ENCODE measurements at regions of chr4 and their contacts with region 1.

Region 1: DNA sequence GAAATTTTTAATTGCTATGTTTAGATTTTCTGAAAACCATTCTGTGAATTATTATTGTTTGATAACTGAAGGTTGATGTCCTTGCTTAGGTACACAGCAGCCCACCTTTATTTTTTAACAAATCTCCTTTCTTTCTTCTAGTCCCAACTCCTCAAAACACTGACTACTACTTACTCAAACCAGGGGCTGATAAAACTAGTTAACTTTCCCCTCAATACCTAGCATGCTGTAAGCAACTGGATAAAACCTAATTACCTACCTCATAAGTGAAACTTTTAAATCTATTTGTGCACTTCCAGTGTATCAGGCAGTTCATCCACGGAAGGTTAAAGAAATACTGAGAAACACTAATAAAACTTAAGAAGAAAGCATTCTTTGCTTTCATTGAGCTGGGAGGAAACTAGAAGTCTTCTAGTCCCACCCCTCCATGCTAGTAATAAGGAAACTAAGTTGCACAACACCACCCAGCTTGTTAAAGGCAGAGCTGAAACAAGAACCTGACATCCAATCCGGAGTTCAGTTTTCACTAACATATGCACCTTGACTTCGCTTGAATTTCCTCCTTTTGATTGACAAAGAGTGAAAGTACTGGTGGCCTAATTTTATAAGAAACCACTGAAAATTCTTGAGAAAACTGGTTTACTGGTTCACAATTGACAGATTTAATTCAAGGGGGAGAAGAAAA is 180.2 kb upstream of the TET2 start:
- DNase-seq: peak; percentile 42
- H3K4me3 Mint-ChIP-seq: peak overlapping the region; percentile 63
- H3K27ac Mint-ChIP-seq: peak overlapping the region; percentile 91
- H3K4me1 Mint-ChIP-seq: peaks cover 17% of the 10 kb centered on the region
- H3K27me3 Mint-ChIP-seq: peaks cover 5% of the 10 kb centered on the region

Region 2: DNA sequence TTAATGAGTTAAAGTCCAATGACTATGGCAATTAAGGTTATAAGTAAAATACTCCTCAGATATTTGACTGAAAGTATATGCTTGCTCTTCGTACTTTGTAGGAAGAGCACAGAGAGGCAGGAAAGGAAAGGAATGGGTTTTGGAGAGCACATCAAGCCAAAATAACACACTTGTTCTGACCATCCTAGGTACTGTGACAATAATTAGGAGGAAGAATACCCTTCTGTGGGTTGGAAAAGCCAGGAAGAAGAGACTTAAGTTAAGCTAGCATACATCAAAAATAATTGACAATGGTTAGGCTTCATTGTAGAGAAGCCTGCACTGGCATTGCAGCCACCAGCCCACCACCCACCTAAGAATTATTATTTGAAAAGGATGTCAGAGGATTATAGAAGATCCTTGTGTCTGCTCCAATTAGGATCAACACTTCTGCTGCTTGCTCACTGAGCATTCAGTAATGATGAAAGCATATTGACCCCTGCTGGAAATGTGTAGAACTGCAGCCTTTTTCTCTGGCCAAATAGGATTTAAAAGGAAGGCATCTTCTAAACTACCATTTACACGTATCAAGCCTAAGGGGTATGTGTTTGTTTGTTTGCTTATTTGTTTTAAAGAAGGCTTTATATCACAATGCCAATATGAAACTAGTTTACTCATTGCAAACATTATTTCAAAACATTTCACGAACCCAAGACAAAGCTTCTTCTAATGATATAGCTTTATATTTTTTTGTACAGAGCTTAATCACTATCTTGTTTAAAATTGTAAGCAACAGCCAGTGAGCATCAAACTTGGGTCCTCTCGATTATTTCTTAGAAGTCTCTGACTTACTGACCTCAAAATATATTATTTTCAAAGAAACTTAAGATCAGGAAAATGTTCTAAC is 106.0 kb before region 1 on chr4:
- intact Hi-C with region 1: no loop called
- DNase-seq: peak; percentile 33
- H3K4me3 Mint-ChIP-seq: no peak overlapping the region
- H3K27ac Mint-ChIP-seq: no peak overlapping the region
- H3K4me1 Mint-ChIP-seq: no peaks in the 10 kb centered on the region
- H3K27me3 Mint-ChIP-seq: peaks cover 14% of the 10 kb centered on the region

Region 3: DNA sequence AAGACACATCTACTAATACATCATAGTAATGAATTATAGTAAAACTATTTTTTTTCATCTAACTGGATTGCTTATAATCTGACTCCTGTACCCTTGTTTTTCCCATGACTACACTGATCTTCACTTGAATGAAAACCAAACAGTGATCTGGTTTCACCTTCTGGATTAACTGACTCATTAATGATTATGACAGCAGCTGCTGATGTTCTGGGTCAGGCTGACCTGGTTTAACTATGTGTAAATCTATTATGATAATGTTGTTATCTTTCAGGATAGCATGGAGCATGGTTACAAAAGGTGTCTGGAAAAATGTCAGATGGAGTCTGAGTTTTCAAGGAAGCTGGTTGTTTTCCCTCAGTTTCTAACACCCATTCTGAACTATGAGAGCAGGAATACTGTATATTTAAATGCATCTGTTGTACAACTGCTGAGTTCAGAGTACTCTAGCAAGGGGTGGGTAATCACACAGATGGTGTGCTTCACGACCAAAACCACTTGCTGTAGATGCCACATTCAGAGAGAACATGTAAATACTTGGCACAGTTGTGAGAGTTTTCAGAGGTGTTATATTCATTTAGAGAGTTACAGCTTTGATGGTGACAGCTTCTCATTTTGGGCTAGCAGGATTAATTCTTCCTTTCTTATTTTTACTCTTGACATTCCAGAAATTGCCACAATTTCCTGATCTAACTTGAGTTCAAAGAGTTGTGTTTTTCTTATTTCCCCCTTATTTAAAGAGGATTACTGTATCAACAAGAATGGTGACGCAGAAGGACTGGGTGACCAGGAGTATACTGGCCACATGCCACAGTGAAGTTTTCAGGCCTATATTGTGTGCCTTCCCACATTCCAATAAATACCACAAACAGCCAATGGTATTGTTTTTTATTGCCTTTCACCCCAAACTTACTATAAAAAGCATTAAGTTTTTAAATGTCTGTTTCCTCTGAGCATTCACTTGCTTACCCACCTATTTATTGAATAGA is 69.5 kb before region 1 on chr4:
- intact Hi-C with region 1: loop called (anchors 2 kb)
- DNase-seq: no peak
- H3K4me3 Mint-ChIP-seq: no peak overlapping the region
- H3K27ac Mint-ChIP-seq: no peak overlapping the region
- H3K4me1 Mint-ChIP-seq: peaks cover 11% of the 10 kb centered on the region
- H3K27me3 Mint-ChIP-seq: no peaks in the 10 kb centered on the region

Region 4: GRCh38 chr4:104941661-104942062 is 24.8 kb before region 1 on chr4:
- intact Hi-C with region 1: loop called (anchors 2 kb)
- DNase-seq: no peak
- H3K4me3 Mint-ChIP-seq: no peak overlapping the region
- H3K27ac Mint-ChIP-seq: no peak overlapping the region
- H3K4me1 Mint-ChIP-seq: peaks cover 23% of the 10 kb centered on the region
- H3K27me3 Mint-ChIP-seq: peaks cover 3% of the 10 kb centered on the region

Region 5: DNA sequence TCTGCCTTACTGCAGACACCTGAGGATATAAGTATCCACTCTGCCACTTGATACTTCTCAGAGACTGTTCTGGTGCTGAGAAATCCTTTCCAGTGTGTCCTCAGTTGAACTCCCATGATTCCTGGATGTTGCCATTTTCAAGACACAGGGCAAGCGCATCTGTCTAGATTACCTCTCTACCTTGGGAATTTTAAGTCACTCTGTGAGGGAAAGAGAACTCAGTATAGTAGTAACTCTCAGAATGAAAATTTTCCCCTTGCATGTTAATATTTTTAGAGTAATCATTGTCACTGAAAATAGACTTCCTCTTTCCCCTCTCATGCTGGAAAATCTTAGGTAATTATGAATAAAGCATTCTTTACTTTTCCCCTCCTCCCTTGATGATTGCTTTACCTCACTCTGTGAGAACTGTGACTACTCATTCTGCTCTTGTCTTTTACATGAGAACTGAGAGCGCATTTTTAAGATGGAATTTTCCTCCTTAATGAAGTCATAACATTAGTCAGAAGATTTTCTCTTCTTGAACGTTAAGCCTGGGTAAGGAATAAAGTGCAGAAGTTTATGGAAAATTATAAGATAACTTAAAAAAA is 225.2 kb after region 1 on chr4:
- intact Hi-C with region 1: loop called (anchors 10 kb)
- DNase-seq: no peak
- H3K4me3 Mint-ChIP-seq: peak overlapping the region; percentile 8
- H3K27ac Mint-ChIP-seq: peak overlapping the region; percentile 74
- H3K4me1 Mint-ChIP-seq: peaks cover 53% of the 10 kb centered on the region
- H3K27me3 Mint-ChIP-seq: no peaks in the 10 kb centered on the region

Region 6: GRCh38 chr4:105306158-105306781 is 339.8 kb after region 1 on chr4:
- intact Hi-C with region 1: loop called (anchors 1 kb)
- DNase-seq: peak; percentile 60
- H3K4me3 Mint-ChIP-seq: peak overlapping the region; percentile 41
- H3K27ac Mint-ChIP-seq: peak overlapping the region; percentile 92
- H3K4me1 Mint-ChIP-seq: peaks cover 25% of the 10 kb centered on the region
- H3K27me3 Mint-ChIP-seq: no peaks in the 10 kb centered on the region

Region 7: DNA sequence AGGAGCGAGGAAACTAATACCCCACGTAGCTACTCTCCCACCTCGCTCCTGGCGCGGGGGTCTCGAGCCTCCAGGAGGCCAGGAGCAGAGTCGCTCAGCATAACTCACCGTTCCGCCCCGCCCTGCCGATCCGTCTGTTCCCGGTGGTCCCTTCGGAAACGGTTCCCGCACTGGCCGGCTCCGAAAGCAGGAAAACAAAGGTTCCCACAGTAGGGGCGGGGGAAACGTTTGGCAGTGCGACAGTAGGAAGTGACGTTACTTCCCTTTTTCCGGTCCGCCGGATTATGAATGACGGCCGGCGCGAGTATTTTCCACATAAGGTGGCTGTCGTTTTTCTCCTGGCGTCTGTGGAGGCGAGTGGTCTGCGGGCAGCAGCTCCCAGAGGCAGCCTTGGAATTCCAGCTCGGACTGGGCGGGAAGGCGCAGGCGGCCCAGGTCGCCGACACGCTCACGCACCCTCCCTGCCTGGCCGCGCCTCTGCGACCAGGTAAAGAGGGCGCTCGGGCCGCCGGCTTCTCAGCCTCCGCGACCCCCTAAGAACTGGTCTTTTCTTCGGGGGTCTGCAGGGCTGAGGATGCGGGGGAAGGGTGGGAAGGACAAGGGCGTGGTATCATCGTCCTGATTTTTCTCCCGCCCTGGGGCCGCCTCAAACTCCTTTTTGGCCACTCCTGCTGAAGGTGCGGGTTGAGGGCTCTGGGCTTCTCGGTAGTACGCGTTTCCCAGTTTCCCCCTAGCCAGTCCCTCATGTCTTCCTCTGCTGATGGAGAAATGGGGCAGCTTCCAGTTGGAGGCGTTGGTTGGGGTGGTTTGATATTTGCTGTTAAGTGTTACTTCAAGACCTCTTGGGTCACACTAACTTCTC is 742.3 kb after region 1 on chr4 and contains the starts of genes GSTCD and INTS12:
- intact Hi-C with region 1: loop called (anchors 2 kb)
- DNase-seq: peak; percentile 83
- H3K4me3 Mint-ChIP-seq: peak within 1 kb of the TSS; percentile 99
- H3K27ac Mint-ChIP-seq: peak within 1 kb of the TSS; percentile 95
- H3K4me1 Mint-ChIP-seq: peaks cover 21% of the 10 kb centered on the region
- H3K27me3 Mint-ChIP-seq: no peaks in the 10 kb centered on the region
- total RNA-seq, gene GSTCD: 17.0 and 20.9 TPM in 2 replicates
- total RNA-seq, gene INTS12: 18.7 and 22.4 TPM in 2 replicates

Measured in activated T-helper 1 cell treated with anti-CD3 and anti-CD28 coated beads, Interleukin-12 subunit alpha, Interleukin-12 subunit beta, Interleukin-2, Interleukin-4 antibody, amounts not matched to agents 30 ng/mL and 10 ng/mL and 1 ng/mL, durations not matched to agents 14 hours and 24 hours and 36 hours (primary cell).